GM23248 (cell line): ENCODE measurements at regions of chr3 and their contacts with region 1.

Region 1: GRCh38 chr3:105366326-105367062 is at the start of gene ALCAM:
- DNase-seq: peak; percentile 100
- H3K4me3 ChIP-seq: peak within 1 kb of the TSS; percentile 85
- H3K27ac ChIP-seq: peak within 1 kb of the TSS; percentile 84
- H3K4me1 ChIP-seq: peaks cover 54% of the 10 kb centered on the region
- H3K27me3 ChIP-seq: no peaks in the 10 kb centered on the region
- total RNA-seq, gene ALCAM: 202 and 208 TPM in 2 replicates

Region 2: DNA sequence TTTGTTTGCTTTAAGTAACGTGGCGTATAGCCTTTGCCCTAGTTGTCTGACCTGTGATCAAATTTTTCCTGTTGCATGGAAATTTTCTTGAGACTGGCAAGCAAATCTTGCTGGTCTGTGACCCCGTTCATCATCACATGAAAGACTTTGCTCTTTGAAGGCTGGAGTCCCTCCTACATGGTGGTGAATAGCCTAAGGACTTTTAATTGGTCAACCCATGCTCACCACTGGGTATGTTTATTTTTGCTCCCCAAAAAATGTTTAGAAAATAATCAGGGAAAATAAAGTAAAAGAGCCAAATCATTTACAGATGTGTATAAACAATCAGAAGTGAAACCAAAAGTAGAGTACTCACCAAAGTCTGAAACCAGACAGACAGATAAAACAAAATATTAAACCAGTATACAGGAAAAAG is 1075.0 kb before region 1 on chr3:
- in situ Hi-C with region 1: loop called (anchors 25 kb)
- DNase-seq: peak; percentile 42
- H3K4me3 ChIP-seq: peak overlapping the region; percentile 62
- H3K27ac ChIP-seq: no peak overlapping the region
- H3K4me1 ChIP-seq: peaks cover 8% of the 10 kb centered on the region; the same call in 1 of the 2 replicates
- H3K27me3 ChIP-seq: no peaks in the 10 kb centered on the region

Region 3: DNA sequence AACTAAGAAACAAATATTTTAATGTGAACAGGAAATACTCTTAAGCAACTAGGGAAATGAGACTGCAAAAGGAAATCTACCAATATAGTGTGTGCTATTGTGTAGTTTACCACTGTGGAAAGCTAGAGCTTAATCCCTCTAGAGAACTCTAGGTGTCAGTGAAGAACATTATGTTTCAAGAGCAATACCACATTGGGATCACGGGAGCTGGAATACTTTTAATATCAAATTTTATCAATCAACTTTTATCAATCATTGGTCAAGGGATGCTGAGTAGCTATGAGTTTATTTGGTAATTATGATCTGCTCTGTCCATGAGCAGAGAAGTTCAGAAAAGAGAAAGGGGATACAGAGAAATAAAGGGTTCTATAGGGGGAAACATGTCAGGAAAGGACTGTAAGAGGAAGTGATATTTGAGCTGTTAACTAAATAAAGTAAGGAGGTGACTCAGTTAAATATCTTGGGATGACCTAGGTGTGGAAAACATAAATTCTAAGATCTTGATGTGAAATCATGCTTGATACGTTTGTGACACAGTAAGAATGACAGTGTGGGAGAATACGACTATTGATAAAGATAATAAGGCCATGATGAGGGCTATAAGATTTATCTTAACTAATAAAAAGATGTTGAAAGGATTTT is 762.0 kb before region 1 on chr3:
- in situ Hi-C with region 1: loop called (anchors 25 kb)
- DNase-seq: peak; percentile 53
- H3K4me3 ChIP-seq: 0 out of 2 replicates have a peak overlapping the region, but pooled peaks have one; percentile 39
- H3K27ac ChIP-seq: no peak overlapping the region
- H3K4me1 ChIP-seq: no peaks in the 10 kb centered on the region
- H3K27me3 ChIP-seq: no peaks in the 10 kb centered on the region

Region 4: GRCh38 chr3:104961851-104962250 is 404.6 kb before region 1 on chr3:
- in situ Hi-C with region 1: no loop called
- DNase-seq: no peak
- H3K4me3 ChIP-seq: no peak overlapping the region
- H3K27ac ChIP-seq: no peak overlapping the region
- H3K4me1 ChIP-seq: peaks cover 7% of the 10 kb centered on the region
- H3K27me3 ChIP-seq: no peaks in the 10 kb centered on the region

Region 5: DNA sequence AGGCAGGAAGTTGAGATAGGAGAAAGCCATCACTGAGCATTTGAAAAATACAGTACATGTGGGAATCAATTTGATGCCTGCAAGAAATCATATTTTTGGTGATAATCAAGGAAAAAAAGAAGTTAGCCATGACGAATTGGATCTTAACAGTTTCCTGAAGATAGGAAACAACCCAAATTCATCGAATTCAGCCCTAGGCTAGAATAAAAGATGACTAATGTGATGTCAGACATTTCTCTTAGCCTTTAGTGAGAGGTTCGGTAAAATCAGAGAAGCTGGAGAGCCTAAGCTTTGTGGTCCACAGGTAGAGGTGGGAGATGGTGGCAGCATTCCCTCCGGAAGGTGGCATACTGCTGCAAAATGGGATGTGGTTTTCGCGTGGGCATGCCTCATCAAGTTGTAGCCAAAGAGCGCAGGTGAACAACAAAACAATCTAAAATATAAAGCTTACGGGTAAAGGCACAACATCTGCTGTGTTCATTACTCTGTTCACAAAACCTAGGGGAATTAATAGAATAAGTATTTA is 143.9 kb before region 1 on chr3:
- in situ Hi-C with region 1: no loop called
- DNase-seq: no peak
- H3K4me3 ChIP-seq: no peak overlapping the region
- H3K27ac ChIP-seq: no peak overlapping the region
- H3K4me1 ChIP-seq: no peaks in the 10 kb centered on the region
- H3K27me3 ChIP-seq: no peaks in the 10 kb centered on the region